ENCODE measurements at regions of chr12 and their contacts with region 1.

Region 1: DNA sequence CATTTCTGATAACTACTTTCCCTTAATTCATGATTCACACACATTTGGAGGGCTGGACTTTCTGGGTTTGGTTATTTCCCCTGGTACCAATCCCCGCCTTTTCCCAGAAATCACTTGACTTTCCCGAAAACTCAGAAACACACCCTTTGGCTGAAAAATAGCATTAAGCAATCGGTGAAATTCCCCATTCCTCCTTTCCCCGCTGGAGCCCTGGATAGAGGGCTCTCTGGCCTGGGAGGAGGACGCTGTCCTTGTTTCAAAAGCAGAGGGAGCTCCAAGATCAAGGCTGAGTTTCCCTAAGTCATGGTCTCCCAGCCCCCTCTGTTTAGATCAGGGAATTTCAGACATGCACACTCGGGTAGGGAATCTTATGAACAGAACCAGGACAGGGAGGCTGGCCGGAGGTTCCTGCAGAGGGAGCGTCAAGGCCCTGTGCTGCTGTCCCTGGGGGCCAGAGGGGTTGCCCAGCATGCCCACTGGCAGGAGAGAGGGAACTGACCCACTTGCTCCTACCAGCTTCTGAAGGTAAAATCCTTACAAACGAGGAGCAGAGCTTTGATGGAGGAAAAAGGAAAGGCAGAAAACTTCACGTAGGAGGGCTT is at the start of gene C1S:
- DNase-seq: peak; percentile 62
- H3K4me3 ChIP-seq: peak within 1 kb of the TSS; percentile 62
- H3K27ac ChIP-seq: peak within 1 kb of the TSS; percentile 85
- H3K4me1 ChIP-seq: peaks cover 17% of the 10 kb centered on the region
- H3K27me3 ChIP-seq: peaks cover 9% of the 10 kb centered on the region
- CTCF ChIP-seq: peak; percentile 86
- total RNA-seq, gene C1S: 108 TPM

Region 2: GRCh38 chr12:7108796-7109571 is 48.5 kb after region 1 on chr12 and contains the start of gene C1RL:
- intact Hi-C with region 1: loop called (anchors 5 kb)
- DNase-seq: peak; percentile 91
- H3K4me3 ChIP-seq: peak within 1 kb of the TSS; percentile 69
- H3K27ac ChIP-seq: peak within 1 kb of the TSS; percentile 93
- H3K4me1 ChIP-seq: peaks cover 27% of the 10 kb centered on the region
- H3K27me3 ChIP-seq: no peaks in the 10 kb centered on the region
- CTCF ChIP-seq: peak; percentile 99
- total RNA-seq, gene C1RL: 8.1 TPM

Measured in left ventricle myocardium inferior (tissue), 1 donor.